Activated T-helper 2 cell treated with anti-CD3 and anti-CD28 coated beads, Interferon-gamma antibody, Interleukin-2, Interleukin-4, amounts not matched to agents 10 μg/mL and 5 μg/mL and 100 μg/mL, durations not matched to agents 14 hours and 24 hours and 36 hours (primary cell): ENCODE measurements at regions of chr5 and their contacts with region 1.

Region 1: GRCh38 chr5:133868946-133869518 is 99.4 kb downstream of the C5orf15 start:
- DNase-seq: peak; percentile 68
- H3K4me3 Mint-ChIP-seq: no peak overlapping the region
- H3K27ac Mint-ChIP-seq: peak overlapping the region; percentile 9
- H3K4me1 Mint-ChIP-seq: peaks cover 24% of the 10 kb centered on the region
- H3K27me3 Mint-ChIP-seq: no peaks in the 10 kb centered on the region

Region 2: GRCh38 chr5:133111299-133111698 is 757.7 kb before region 1 on chr5:
- intact Hi-C with region 1: loop called (anchors 10 kb)
- DNase-seq: peak; percentile 64
- H3K4me3 Mint-ChIP-seq: no peak overlapping the region
- H3K27ac Mint-ChIP-seq: no peak overlapping the region
- H3K4me1 Mint-ChIP-seq: peaks cover 26% of the 10 kb centered on the region
- H3K27me3 Mint-ChIP-seq: peaks cover 2% of the 10 kb centered on the region

Region 3: GRCh38 chr5:133552931-133553525 is 316.0 kb before region 1 on chr5:
- intact Hi-C with region 1: loop called (anchors 1 kb)
- DNase-seq: peak; percentile 40
- H3K4me3 Mint-ChIP-seq: no peak overlapping the region
- H3K27ac Mint-ChIP-seq: no peak overlapping the region
- H3K4me1 Mint-ChIP-seq: peaks cover 4% of the 10 kb centered on the region
- H3K27me3 Mint-ChIP-seq: peaks cover 27% of the 10 kb centered on the region

Region 4: DNA sequence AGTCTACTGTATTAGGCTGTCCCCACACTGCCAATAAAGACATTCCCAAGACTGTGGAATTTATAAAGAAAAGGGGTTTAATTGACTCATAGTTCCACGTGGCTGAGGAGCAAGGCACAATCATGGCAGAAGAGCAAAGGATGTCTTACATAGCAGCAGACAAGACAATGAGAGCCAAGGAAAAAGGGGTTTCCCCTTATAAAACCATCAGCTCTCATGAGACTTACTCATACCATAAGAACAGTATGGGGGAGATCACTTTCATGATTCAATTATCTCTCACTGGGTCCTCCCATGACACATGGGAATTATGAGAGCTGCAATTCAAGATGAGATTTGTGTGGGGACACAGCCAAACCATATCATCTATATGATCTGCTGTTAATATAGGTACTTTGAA is 241.9 kb before region 1 on chr5:
- intact Hi-C with region 1: loop called (anchors 10 kb)
- DNase-seq: no peak
- H3K4me3 Mint-ChIP-seq: no peak overlapping the region
- H3K27ac Mint-ChIP-seq: no peak overlapping the region
- H3K4me1 Mint-ChIP-seq: peaks cover 5% of the 10 kb centered on the region
- H3K27me3 Mint-ChIP-seq: peaks cover 28% of the 10 kb centered on the region

Region 5: DNA sequence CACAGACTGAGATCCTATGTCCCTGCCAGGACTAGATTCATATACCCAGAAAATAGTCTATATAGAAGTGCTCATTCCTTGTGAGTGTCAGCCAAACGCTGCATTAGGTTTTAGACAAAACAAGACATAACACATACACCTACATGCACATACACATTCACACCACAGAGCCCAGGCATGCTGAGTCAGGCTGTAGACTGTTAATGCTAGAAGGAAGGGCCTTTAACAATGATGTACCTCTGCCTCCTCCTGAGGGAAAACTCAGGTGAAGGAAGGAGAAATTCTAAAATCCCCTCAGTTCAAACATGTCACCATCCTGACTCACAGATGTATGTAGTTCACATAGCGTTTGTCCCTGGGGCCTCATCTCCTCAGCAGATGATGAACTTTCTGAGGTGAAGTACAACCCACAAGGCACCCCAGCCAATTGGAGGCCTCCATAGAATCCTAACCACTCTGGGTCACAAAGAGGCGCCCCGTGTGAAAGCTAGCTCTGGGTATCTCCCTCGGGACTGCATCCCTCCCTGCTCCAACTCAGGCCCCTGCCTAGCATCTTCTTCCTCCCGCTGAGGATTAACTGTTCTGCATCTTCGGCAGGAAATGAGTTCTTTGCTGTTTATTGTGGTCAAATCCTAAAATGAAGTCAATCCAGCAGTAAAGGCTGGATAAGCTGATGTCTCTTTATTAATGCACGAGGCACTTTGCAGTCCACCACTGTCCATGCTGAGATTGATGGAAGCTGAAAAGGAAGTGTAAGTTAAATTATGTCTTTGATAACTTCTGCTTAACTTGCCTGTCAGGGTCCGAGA is 215.9 kb before region 1 on chr5:
- intact Hi-C with region 1: no loop called
- DNase-seq: no peak
- H3K4me3 Mint-ChIP-seq: no peak overlapping the region
- H3K27ac Mint-ChIP-seq: no peak overlapping the region
- H3K4me1 Mint-ChIP-seq: no peaks in the 10 kb centered on the region
- H3K27me3 Mint-ChIP-seq: peaks cover 16% of the 10 kb centered on the region

Region 6: DNA sequence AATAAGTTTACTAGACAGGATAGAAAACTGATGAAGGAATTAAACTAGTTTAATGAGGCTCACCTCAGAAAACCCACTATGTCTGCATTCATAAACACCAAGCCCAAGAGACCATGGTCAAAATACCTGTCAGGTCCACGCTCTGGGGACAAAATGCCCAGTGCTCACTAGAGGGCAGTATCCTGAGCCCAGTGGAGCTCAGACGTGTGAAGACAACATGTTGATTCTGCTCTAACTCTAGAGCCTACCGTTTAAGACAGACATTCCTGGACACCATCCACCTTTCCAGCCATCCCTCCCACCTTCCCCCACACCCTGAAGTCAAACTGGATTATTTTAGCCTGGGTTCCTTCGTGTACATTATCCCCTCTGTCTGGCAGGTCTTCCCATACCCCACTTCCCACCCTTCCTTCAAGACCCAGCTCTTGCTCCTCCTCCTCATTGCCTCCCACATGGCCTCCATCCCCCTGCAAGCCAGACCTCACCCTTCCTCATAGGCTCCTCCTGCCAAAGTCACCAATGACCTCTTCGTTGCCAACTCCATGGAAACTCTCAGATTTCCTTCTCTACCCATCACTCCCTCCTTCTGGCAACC is 114.4 kb before region 1 on chr5:
- intact Hi-C with region 1: loop called (anchors 1 kb)
- DNase-seq: no peak
- H3K4me3 Mint-ChIP-seq: no peak overlapping the region
- H3K27ac Mint-ChIP-seq: no peak overlapping the region
- H3K4me1 Mint-ChIP-seq: peaks cover 6% of the 10 kb centered on the region
- H3K27me3 Mint-ChIP-seq: peaks cover 18% of the 10 kb centered on the region

Region 7: GRCh38 chr5:133785182-133785581 is 83.8 kb before region 1 on chr5:
- intact Hi-C with region 1: no loop called
- DNase-seq: no peak
- H3K4me3 Mint-ChIP-seq: no peak overlapping the region
- H3K27ac Mint-ChIP-seq: no peak overlapping the region
- H3K4me1 Mint-ChIP-seq: no peaks in the 10 kb centered on the region
- H3K27me3 Mint-ChIP-seq: peaks cover 4% of the 10 kb centered on the region

Region 8: DNA sequence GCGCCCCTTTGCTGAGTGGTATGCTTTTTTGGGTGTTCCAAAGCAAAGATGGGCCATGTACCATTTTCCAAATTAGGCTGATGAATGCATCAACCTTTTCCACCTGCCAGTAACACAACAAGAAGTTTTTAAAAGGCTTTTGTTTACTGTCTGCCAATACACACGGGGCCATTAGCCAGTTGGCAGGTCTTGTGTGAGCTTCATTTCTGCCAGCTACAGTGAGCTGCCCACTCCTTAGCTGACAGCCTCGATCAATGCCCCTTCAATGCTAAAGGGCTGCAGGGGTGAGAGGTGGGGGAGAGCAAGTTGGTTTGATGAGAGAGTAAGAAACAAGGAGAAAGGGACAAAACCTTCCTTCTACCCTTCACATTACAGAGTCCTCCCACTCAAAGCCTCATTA is 29.3 kb before region 1 on chr5:
- intact Hi-C with region 1: no loop called
- DNase-seq: no peak
- H3K4me3 Mint-ChIP-seq: no peak overlapping the region
- H3K27ac Mint-ChIP-seq: no peak overlapping the region
- H3K4me1 Mint-ChIP-seq: peaks cover 3% of the 10 kb centered on the region
- H3K27me3 Mint-ChIP-seq: peaks cover 17% of the 10 kb centered on the region

Region 9: DNA sequence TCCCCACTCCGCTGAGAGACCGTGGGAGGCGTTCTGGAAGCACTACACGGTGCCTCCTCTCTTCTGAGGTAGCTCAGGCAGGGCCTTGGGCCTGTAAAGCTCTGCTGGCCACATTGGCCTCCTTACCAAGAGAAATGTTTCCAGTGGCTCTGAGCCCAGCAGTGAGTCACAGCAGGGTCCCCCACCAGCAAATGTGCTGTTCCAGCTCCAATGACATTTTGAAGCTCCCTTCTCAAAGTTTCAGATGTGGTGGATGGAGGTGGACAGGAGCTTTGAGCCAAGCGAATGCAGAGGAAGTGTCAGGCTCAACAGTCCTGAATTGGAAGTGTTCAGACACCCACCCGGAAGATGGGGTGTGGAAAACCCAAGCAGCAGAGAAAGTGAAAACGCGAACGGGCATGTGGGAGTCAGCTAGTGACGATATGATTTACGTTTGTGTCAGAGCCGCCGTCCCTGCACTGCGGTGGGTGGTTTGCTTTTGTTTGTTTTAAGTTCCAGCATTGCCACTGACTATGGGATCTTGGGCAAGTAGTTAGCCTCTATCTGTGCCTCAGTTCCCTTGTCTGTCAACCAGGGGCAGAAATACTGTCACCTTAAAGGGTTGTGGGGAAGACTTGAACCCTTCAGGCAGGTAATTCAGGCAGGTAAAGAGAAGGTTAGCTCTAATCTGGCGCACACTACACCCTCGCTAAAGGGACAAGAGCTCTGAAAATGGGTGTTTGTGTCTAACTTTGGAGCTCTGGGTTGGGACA is 61.2 kb after region 1 on chr5:
- intact Hi-C with region 1: loop called (anchors 1 kb)
- DNase-seq: peak; percentile 39
- H3K4me3 Mint-ChIP-seq: peak overlapping the region; percentile 54
- H3K27ac Mint-ChIP-seq: peak overlapping the region; percentile 97
- H3K4me1 Mint-ChIP-seq: peaks cover 55% of the 10 kb centered on the region
- H3K27me3 Mint-ChIP-seq: no peaks in the 10 kb centered on the region

Region 10: DNA sequence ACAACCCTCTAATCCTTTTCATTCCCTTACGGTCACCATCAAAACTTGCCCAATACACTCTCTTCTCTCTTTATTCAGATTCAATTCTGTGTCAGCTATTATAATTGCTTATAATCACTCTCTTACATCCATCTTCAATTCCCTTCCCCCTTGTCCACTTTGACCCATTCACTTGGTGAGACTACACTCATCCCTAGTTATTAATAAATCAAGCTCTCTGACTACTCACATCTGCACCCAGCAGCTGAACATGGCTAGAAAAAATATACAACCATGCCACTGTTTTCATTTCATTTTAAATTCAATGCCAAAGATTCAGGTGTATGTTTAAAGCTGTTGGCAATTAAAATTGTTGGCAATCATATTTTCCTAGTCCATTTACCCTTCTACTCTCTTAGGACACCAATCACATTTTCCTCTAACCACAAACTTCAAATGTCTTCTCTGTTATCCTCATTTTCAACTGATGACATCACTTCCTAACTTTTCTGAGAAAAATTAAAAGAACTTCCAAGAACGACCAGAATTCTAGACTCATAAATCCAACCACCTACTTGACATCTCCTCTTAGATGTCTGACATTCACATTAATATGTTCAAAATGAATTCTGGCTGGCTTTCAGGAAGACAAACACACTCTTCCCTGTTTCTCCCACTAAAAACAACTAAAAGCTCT is 93.9 kb after region 1 on chr5:
- intact Hi-C with region 1: loop called (anchors 1 kb)
- DNase-seq: no peak
- H3K4me3 Mint-ChIP-seq: peak overlapping the region; percentile 22
- H3K27ac Mint-ChIP-seq: peak overlapping the region; percentile 85
- H3K4me1 Mint-ChIP-seq: peaks cover 58% of the 10 kb centered on the region
- H3K27me3 Mint-ChIP-seq: no peaks in the 10 kb centered on the region